Activated naive CD4-positive, alpha-beta T cell treated with anti-CD3 and anti-CD28 coated beads for 36 hours (primary cell): ENCODE measurements at regions of chr14 and their contacts with region 1.

Region 1: GRCh38 chr14:31026395-31027118 is 378 bp upstream of the STRN3 start:
- DNase-seq: peak; percentile 92
- H3K4me3 Mint-ChIP-seq: peak overlapping the region; percentile 96
- H3K27ac Mint-ChIP-seq: peak overlapping the region; percentile 96
- H3K4me1 Mint-ChIP-seq: peaks cover 55% of the 10 kb centered on the region
- H3K27me3 Mint-ChIP-seq: no peaks in the 10 kb centered on the region

Region 2: DNA sequence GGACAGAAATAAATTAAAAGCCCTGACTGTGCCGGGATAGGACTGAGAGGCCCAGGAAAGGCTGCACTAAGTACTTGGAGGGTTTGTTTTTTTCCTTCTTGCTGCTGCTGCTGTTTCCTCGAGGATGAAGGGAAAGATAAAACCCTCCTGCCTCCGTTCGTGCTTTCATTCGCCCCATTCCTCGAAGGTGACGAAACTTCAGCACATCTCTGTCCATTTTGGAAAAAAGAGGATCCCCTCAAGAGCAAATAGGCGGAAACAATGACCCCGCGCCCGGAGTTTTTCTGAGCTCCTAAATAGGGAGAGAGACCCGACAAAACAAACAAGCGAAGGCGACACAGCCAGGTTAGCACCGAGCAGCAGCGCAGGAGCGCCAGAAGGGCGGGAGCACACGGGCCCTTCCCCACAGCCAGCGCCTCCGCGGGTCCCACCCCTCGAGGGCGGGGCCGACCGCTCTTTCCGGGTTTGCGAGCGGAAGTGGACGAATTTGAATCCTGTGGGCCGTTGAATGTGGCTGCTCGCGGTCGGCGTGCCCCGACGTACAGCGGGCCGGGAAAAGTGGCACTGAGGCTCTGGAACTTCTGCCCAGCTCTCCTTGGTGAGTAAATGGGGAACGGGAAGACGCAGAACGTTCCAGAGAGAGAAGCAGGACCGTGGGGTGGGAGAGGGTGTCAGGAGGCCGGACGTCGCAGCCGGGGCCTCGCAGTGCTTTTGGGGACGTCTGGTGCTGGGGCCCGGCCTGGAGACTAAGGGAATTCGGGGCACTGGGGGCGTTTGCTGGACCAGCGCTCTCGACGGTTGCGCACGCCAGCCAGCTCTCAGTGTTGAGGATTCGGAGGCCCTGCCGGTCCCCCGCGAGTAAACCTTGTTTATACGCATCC is 467.6 kb before region 1 on chr14 and contains the start of gene G2E3:
- CTCF ChIA-PET with region 1: no interaction called
- intact Hi-C with region 1: loop called (anchors 1 kb)
- DNase-seq: peak; percentile 92
- H3K4me3 Mint-ChIP-seq: peak within 1 kb of the TSS; percentile 100
- H3K27ac Mint-ChIP-seq: peak within 1 kb of the TSS; percentile 99
- H3K4me1 Mint-ChIP-seq: peaks cover 30% of the 10 kb centered on the region
- H3K27me3 Mint-ChIP-seq: no peaks in the 10 kb centered on the region
- total RNA-seq, gene G2E3: 28.6 to 29.1 TPM

Region 3: DNA sequence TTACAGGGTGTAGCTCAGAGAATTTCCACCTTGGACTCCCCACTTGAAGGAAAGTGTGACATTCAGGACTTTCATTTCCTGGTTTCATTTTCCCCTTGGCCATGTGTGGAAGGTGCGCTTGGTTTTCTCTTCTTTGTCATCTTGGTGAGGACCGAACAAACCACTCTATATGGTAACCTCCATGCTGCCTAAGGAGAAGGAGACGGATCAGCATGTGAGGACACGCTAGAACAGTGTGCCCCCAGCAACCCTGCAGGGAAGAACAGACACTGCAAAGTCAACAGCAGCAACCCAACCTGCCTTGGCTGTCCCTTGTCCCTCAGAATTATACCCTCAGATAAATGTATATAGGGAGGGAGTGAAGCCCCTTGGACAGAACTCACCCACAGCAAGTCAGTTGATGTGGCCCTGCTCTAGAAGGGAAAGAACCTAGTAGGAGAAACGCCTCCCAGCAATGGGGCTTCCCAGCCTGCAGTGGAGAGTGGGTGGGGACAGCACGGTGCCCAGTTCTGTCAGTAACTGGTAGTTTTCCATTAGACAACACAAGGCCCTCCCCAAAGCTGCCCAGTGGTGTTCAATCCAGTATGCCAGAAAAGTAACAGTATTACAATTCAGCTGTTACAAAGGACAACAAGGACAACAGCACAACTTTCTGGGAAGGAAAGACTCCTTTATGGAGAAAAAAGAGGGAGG is 171.1 kb before region 1 on chr14:
- CTCF ChIA-PET with region 1: no interaction called
- intact Hi-C with region 1: loop called (anchors 2 kb)
- DNase-seq: peak; percentile 61
- H3K4me3 Mint-ChIP-seq: no peak overlapping the region
- H3K27ac Mint-ChIP-seq: peak overlapping the region; percentile 12
- H3K4me1 Mint-ChIP-seq: peaks cover 17% of the 10 kb centered on the region
- H3K27me3 Mint-ChIP-seq: peaks cover 17% of the 10 kb centered on the region

Region 4: GRCh38 chr14:30949651-30950050 is 76.9 kb before region 1 on chr14:
- CTCF ChIA-PET with region 1: no interaction called
- intact Hi-C with region 1: no loop called
- DNase-seq: no peak
- H3K4me3 Mint-ChIP-seq: no peak overlapping the region
- H3K27ac Mint-ChIP-seq: no peak overlapping the region
- H3K4me1 Mint-ChIP-seq: peaks cover 3% of the 10 kb centered on the region
- H3K27me3 Mint-ChIP-seq: no peaks in the 10 kb centered on the region

Region 5: GRCh38 chr14:30994681-30995620 is 31.6 kb before region 1 on chr14:
- CTCF ChIA-PET with region 1: no interaction called
- intact Hi-C with region 1: loop called (anchors 1 kb)
- DNase-seq: no peak
- H3K4me3 Mint-ChIP-seq: peak overlapping the region; percentile 10
- H3K27ac Mint-ChIP-seq: peak overlapping the region; percentile 66
- H3K4me1 Mint-ChIP-seq: peaks cover 47% of the 10 kb centered on the region
- H3K27me3 Mint-ChIP-seq: no peaks in the 10 kb centered on the region

Region 6: GRCh38 chr14:31127690-31128089 is 101.1 kb after region 1 on chr14:
- CTCF ChIA-PET with region 1: no interaction called
- intact Hi-C with region 1: loop called (anchors 5 kb)
- DNase-seq: peak; percentile 10
- H3K4me3 Mint-ChIP-seq: no peak overlapping the region
- H3K27ac Mint-ChIP-seq: no peak overlapping the region
- H3K4me1 Mint-ChIP-seq: peaks cover 27% of the 10 kb centered on the region
- H3K27me3 Mint-ChIP-seq: no peaks in the 10 kb centered on the region

Region 7: DNA sequence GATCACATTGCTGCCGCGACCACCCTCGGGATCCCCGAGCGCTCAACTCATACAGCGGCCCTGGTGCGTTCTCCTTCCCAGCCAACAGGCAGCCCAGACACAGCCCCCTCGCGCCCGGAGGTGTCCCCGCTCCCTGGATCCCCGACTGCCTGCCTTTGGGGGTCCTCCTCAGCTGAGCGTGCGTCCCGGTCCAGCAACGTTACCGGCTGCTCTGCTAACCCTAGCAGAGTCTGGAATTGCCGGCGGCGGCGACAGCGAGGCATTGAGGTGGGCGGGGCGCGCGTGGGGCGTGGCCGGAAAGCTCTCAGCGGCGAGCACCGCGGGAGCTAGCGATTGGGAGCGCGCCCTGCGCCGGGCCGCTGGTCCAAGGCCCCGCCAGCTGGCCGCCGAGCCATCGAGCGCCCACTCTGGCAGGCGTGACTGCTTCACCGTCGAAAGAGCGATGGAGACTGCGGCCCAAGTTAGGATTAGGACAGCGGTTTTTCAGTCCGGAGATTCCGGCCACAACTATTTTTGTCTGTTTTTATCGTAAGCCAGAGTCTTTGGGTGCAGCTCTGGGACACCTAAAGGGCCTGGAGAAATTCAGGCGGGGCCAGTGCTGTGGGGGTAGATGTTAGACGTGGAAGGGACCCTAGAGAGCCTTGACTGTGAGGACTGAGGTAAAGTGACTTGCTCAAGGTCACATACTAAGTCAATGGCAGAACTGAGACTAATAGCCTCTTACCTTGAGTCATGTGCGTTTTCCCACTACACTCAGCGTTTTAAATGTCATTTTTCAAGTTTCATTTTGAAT is 394.0 kb after region 1 on chr14 and contains the start of gene HEATR5A:
- CTCF ChIA-PET with region 1: no interaction called
- intact Hi-C with region 1: loop called (anchors 1 kb)
- DNase-seq: peak; percentile 90
- H3K4me3 Mint-ChIP-seq: peak within 1 kb of the TSS; percentile 91
- H3K27ac Mint-ChIP-seq: peak within 1 kb of the TSS; percentile 82
- H3K4me1 Mint-ChIP-seq: peaks cover 17% of the 10 kb centered on the region
- H3K27me3 Mint-ChIP-seq: no peaks in the 10 kb centered on the region
- total RNA-seq, gene HEATR5A: 3.5 to 6.0 TPM

Region 8: GRCh38 chr14:31561155-31561846 is 534.7 kb after region 1 on chr14 and contains the start of gene NUBPL:
- CTCF ChIA-PET with region 1: no interaction called
- intact Hi-C with region 1: loop called (anchors 2 kb)
- DNase-seq: peak; percentile 98
- H3K4me3 Mint-ChIP-seq: peak within 1 kb of the TSS; percentile 96
- H3K27ac Mint-ChIP-seq: peak within 1 kb of the TSS; percentile 92
- H3K4me1 Mint-ChIP-seq: peaks cover 23% of the 10 kb centered on the region
- H3K27me3 Mint-ChIP-seq: no peaks in the 10 kb centered on the region
- total RNA-seq, gene NUBPL: 11.5 to 13.5 TPM